A549 (cell line): ENCODE measurements at regions of chr17 and their contacts with region 1.

Region 1: GRCh38 chr17:76585818-76586593 is at the start of gene ST6GALNAC2:
- DNase-seq: peak; percentile 59 to 70
- ATAC-seq: peak; percentile 84 to 92
- H3K4me3 ChIP-seq: peak within 1 kb of the TSS; percentile 64
- H3K27ac ChIP-seq: peak within 1 kb of the TSS; percentile 76 to 89
- H3K4me1 ChIP-seq: 0 out of 3 replicates have a peak, but pooled peaks cover 3% of the 10 kb centered on the region
- CTCF ChIP-seq: peak; percentile 25; the same call in 2 of the 3 replicates
- EP300 ChIP-seq: no peak
- POLR2A ChIP-seq: no peak
- RAD21 ChIP-seq: peak; percentile 33 to 59; a peak in 4 of 5 replicates
- polyA plus RNA-seq, gene ST6GALNAC2: 0.74 and 0.78 TPM in 2 replicates

Region 2: GRCh38 chr17:76567634-76568432 is 18.2 kb before region 1 on chr17:
- CTCF ChIA-PET with region 1: interaction called, 30 read pairs
- POLR2A ChIA-PET with region 1: no interaction called
- DNase-seq: no peak
- ATAC-seq: peak; percentile 30 to 46
- H3K4me3 ChIP-seq: no peak overlapping the region
- H3K27ac ChIP-seq: peak overlapping the region in 1 of 2 experiments; percentile 23; a peak in 2 of 6 replicates
- H3K4me1 ChIP-seq: peaks cover 34% of the 10 kb centered on the region; the same call in 2 of the 3 replicates
- CTCF ChIP-seq: no peak
- EP300 ChIP-seq: no peak
- POLR2A ChIP-seq: no peak
- RAD21 ChIP-seq: no peak

Region 3: GRCh38 chr17:76597728-76598474 is 11.9 kb after region 1 on chr17:
- CTCF ChIA-PET with region 1: interaction called, 32 read pairs
- POLR2A ChIA-PET with region 1: no interaction called
- DNase-seq: no peak
- ATAC-seq: peak; percentile 29 to 36; a peak in 4 of 6 replicates
- H3K4me3 ChIP-seq: no peak overlapping the region
- H3K27ac ChIP-seq: no peak overlapping the region
- H3K4me1 ChIP-seq: peaks cover 8% of the 10 kb centered on the region; the same call in 2 of the 3 replicates
- CTCF ChIP-seq: no peak
- EP300 ChIP-seq: no peak
- POLR2A ChIP-seq: no peak
- RAD21 ChIP-seq: no peak

Region 4: GRCh38 chr17:76997981-76998531 is 412.1 kb after region 1 on chr17:
- CTCF ChIA-PET with region 1: no interaction called
- POLR2A ChIA-PET with region 1: no interaction called
- DNase-seq: no peak
- ATAC-seq: no peak
- H3K4me3 ChIP-seq: no peak overlapping the region
- H3K27ac ChIP-seq: peak overlapping the region; percentile 55 to 93; a peak in 5 of 6 replicates
- H3K4me1 ChIP-seq: peaks cover 36% of the 10 kb centered on the region
- CTCF ChIP-seq: no peak
- EP300 ChIP-seq: no peak
- POLR2A ChIP-seq: no peak
- RAD21 ChIP-seq: no peak